ENCODE measurements at regions of chr4 and their contacts with region 1.

Region 1: DNA sequence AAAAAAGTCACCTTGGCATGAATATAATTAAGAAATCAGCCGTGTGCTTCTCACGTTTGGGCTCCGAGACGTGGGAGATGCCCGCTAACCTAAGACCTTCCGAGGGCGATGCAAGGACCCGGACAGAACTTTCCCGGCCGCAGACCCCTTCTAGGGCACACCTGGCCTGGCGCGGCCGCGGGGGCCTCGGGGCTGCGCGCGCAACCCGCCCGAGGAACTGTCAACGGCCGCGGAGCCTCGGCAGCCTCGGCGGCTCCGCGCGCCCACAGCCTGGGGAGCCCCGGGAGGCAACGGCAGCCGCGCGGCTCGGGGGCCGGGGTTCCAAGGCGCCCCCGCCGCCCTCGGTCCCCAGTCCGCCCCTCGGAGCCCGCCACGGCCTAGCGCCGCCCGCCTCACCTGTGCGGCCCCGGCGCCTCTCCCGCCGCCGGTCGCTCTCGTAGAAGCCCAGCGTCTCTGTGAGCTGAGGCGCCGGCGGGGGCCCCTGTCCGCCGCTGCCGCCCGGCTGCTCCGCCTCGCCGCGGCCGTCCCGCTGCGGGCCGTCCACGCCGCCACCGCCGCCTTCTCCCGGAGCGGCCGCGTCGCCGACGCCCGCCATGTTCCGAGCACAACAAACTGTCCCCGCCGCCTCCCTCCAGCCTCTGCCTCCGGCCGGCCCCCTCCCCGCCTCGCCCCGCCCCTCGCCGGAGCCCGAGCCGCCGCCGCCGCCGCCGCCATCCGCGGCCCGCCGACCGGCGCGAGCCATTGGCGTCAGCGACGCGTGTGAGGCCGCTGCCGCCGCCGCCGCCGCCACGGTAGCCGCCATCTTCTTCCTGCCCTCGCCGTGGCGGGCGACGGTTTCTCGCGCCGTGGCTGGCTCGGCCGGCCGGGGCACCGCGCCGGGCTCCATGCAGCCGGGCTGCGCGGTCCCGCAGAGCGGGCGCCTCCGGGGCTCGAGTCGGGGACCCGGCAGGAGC is at the start of gene TAPT1:
- DNase-seq: peak; percentile 79
- H3K4me3 Mint-ChIP-seq: peak within 1 kb of the TSS; percentile 91
- H3K27ac Mint-ChIP-seq: peak within 1 kb of the TSS; percentile 98
- H3K4me1 Mint-ChIP-seq: peaks cover 56% of the 10 kb centered on the region
- H3K27me3 Mint-ChIP-seq: no peaks in the 10 kb centered on the region
- total RNA-seq, gene TAPT1: 48.6 to 48.9 TPM

Region 2: DNA sequence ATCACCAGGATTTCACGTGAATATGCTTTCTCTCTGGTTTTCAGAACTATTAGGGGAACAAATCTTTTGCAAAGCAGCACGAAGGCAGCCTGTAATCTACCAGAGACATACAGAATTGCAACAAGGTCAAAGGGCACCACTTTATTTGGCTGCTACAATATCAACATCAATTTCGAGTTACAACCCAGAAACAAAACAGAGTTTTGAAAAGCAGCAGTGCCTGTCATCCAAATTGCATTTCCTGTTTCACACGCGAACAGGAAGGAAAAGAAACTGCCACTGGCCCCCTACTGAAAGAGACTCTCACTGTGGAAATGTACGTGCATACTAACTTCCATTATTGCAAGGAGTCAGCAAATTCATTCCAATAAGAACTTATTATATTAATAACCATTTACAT is 815.4 kb before region 1 on chr4:
- CTCF ChIA-PET with region 1: no interaction called
- intact Hi-C with region 1: loop called (anchors 5 kb)
- DNase-seq: peak; percentile 52
- H3K4me3 Mint-ChIP-seq: peak overlapping the region; percentile 29
- H3K27ac Mint-ChIP-seq: peak overlapping the region; percentile 68
- H3K4me1 Mint-ChIP-seq: peaks cover 40% of the 10 kb centered on the region
- H3K27me3 Mint-ChIP-seq: no peaks in the 10 kb centered on the region

Region 3: GRCh38 chr4:15794905-15795304 is 431.2 kb before region 1 on chr4:
- CTCF ChIA-PET with region 1: no interaction called
- intact Hi-C with region 1: loop called (anchors 5 kb)
- DNase-seq: no peak
- H3K4me3 Mint-ChIP-seq: peak overlapping the region; percentile 39
- H3K27ac Mint-ChIP-seq: peak overlapping the region; percentile 47
- H3K4me1 Mint-ChIP-seq: peaks cover 53% of the 10 kb centered on the region
- H3K27me3 Mint-ChIP-seq: no peaks in the 10 kb centered on the region

Region 4: GRCh38 chr4:15976456-15977447 is 249.4 kb before region 1 on chr4:
- CTCF ChIA-PET with region 1: no interaction called
- intact Hi-C with region 1: no loop called
- DNase-seq: no peak
- H3K4me3 Mint-ChIP-seq: no peak overlapping the region
- H3K27ac Mint-ChIP-seq: no peak overlapping the region
- H3K4me1 Mint-ChIP-seq: no peaks in the 10 kb centered on the region
- H3K27me3 Mint-ChIP-seq: no peaks in the 10 kb centered on the region

Region 5: DNA sequence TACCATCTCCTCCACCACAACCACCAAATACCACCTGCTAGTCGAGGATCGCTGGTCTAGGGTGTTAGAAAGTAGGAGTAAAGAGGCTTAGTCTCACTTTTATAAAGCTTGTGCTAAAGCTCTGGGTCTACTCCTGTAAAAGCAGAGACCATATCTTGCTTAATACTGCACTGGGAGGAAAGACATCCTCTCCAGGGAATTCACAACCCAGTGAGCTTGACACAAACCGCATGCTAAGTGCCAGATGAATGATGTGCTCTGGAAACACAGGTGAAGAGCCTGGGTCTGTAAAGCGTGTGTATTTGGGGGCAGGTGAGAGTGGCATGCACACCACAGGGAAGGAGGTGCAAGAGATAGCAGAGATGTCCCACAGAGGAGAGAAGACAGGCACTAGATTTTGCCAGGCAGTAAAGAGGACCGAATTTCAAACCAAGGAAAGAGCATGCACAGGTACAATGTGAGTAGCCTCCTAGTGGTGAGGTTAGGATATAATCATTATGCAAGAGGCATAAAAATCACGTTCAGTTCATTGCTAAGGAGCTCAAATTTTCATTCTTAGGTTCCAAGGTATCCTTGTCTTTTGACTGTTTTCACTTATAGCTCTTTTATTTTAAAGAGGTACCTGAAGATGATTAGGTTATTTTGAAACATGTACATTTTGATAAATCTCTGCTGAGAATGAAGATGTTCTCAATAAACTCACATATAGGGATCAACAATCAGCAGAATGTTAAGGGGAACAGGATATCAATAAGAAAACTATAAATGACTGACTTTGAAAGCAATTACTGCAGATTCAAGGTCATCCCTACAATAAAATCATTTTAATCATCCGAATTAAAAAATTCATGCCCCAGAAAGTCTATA is 20.6 kb before region 1 on chr4:
- CTCF ChIA-PET with region 1: interaction called, 12 read pairs
- intact Hi-C with region 1: no loop called
- DNase-seq: no peak
- H3K4me3 Mint-ChIP-seq: no peak overlapping the region
- H3K27ac Mint-ChIP-seq: no peak overlapping the region
- H3K4me1 Mint-ChIP-seq: peaks cover 39% of the 10 kb centered on the region
- H3K27me3 Mint-ChIP-seq: no peaks in the 10 kb centered on the region

Region 6: DNA sequence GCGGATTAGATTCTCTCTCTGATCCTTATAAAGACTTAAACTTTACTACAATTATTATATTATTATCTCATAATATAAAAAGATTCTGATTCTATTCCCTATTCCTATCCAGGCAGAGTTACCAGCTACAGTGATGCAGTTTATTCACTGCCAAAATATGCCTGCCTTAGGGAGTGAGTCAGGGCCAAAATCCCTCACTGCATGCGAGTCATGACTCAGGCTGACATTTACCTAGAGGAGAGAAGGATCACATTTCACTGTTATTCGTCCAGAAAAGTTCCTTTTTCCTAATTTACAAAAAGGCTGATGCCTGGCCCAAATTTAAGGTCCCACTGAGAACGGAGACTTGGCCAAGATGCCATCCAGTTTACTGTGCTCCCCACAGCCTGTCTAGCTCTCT is 840.8 kb after region 1 on chr4:
- CTCF ChIA-PET with region 1: no interaction called
- intact Hi-C with region 1: no loop called
- DNase-seq: no peak
- H3K4me3 Mint-ChIP-seq: no peak overlapping the region
- H3K27ac Mint-ChIP-seq: no peak overlapping the region
- H3K4me1 Mint-ChIP-seq: no peaks in the 10 kb centered on the region
- H3K27me3 Mint-ChIP-seq: peaks cover under 1% of the 10 kb centered on the region

Region 7: DNA sequence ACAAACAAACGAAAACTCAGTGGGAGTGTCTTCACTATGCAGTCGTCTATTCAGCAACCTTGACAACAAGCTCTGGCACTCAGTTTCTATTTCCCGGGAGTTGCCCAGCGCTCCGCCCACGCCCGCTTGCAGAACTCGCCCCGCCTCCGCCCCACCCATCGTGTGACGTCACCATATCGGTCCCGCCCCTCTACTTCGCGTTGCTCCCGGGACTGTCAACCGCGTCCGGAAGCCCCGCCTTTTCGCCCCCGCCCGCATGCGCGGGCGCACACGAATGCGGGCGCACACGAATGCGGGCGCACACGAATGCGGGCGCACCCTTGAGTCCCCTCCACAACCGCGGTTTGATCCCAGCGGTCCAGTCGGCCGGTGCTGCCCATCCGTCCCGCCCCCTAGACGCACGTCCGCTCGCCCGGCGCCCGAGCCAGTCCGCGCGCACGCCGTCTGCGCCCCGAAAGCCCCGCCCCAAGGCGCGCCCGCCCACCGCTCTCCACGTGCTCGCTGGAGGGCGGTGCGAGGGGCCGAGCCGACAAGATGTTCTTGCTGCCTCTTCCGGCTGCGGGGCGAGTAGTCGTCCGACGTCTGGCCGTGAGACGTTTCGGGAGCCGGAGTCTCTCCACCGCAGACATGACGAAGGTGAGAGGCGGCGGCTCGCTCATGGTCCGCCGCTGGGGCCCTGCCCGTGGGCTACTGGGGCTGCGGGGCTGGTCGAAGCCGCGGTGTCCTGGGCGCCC is 1351.0 kb after region 1 on chr4 and contains the start of gene LAP3:
- CTCF ChIA-PET with region 1: no interaction called
- intact Hi-C with region 1: loop called (anchors 1 kb)
- DNase-seq: peak; percentile 99
- H3K4me3 Mint-ChIP-seq: peak within 1 kb of the TSS; percentile 89
- H3K27ac Mint-ChIP-seq: peak within 1 kb of the TSS; percentile 95
- H3K4me1 Mint-ChIP-seq: peaks cover 24% of the 10 kb centered on the region
- H3K27me3 Mint-ChIP-seq: no peaks in the 10 kb centered on the region
- total RNA-seq, gene LAP3: 109 to 111 TPM

Region 8: GRCh38 chr4:18021722-18022571 is 1795.8 kb after region 1 on chr4 and contains the start of gene LCORL:
- CTCF ChIA-PET with region 1: no interaction called
- intact Hi-C with region 1: loop called (anchors 5 kb)
- DNase-seq: peak; percentile 89
- H3K4me3 Mint-ChIP-seq: peak within 1 kb of the TSS; percentile 98
- H3K27ac Mint-ChIP-seq: peak within 1 kb of the TSS; percentile 79
- H3K4me1 Mint-ChIP-seq: peaks cover 14% of the 10 kb centered on the region
- H3K27me3 Mint-ChIP-seq: peaks cover 16% of the 10 kb centered on the region
- total RNA-seq, gene LCORL: 8.6 to 9.4 TPM

Measured in activated naive CD4-positive, alpha-beta T cell treated with anti-CD3 and anti-CD28 coated beads for 36 hours (primary cell).